B cell (primary cell): ENCODE measurements at regions of chr3 and their contacts with region 1.

Region 1: GRCh38 chr3:142279965-142280590 is 54.7 kb upstream of the GK5 start:
- DNase-seq: peak; percentile 72
- ATAC-seq: peak; percentile 67
- H3K4me3 ChIP-seq: no peak overlapping the region
- H3K4me3 Mint-ChIP-seq: no peak overlapping the region
- H3K27ac ChIP-seq: no peak overlapping the region
- H3K27ac Mint-ChIP-seq: no peak overlapping the region
- H3K4me1 ChIP-seq: no peaks in the 10 kb centered on the region
- H3K4me1 Mint-ChIP-seq: no peaks in the 10 kb centered on the region
- H3K27me3 ChIP-seq: no peaks in the 10 kb centered on the region
- H3K27me3 Mint-ChIP-seq: no peaks in the 10 kb centered on the region
- CTCF ChIP-seq: peak; percentile 64

Region 2: GRCh38 chr3:141959921-141960554 is 320.0 kb before region 1 on chr3:
- CTCF ChIA-PET with region 1: interaction called, 27 read pairs
- POLR2A ChIA-PET with region 1: no interaction called
- intact Hi-C with region 1: no loop called
- DNase-seq: no peak
- ATAC-seq: no peak
- H3K4me3 ChIP-seq: no peak overlapping the region
- H3K4me3 Mint-ChIP-seq: no peak overlapping the region
- H3K27ac ChIP-seq: no peak overlapping the region
- H3K27ac Mint-ChIP-seq: no peak overlapping the region
- H3K4me1 ChIP-seq: no peaks in the 10 kb centered on the region
- H3K4me1 Mint-ChIP-seq: no peaks in the 10 kb centered on the region
- H3K27me3 ChIP-seq: no peaks in the 10 kb centered on the region
- H3K27me3 Mint-ChIP-seq: no peaks in the 10 kb centered on the region
- CTCF ChIP-seq: no peak

Region 3: GRCh38 chr3:142124243-142124642 is 155.8 kb before region 1 on chr3:
- CTCF ChIA-PET with region 1: interaction called, 63 read pairs
- POLR2A ChIA-PET with region 1: no interaction called
- intact Hi-C with region 1: no loop called
- DNase-seq: no peak
- ATAC-seq: no peak
- H3K4me3 ChIP-seq: no peak overlapping the region
- H3K4me3 Mint-ChIP-seq: no peak overlapping the region
- H3K27ac ChIP-seq: no peak overlapping the region
- H3K27ac Mint-ChIP-seq: no peak overlapping the region
- H3K4me1 ChIP-seq: no peaks in the 10 kb centered on the region
- H3K4me1 Mint-ChIP-seq: peaks cover 1% of the 10 kb centered on the region
- H3K27me3 ChIP-seq: no peaks in the 10 kb centered on the region
- H3K27me3 Mint-ChIP-seq: no peaks in the 10 kb centered on the region
- CTCF ChIP-seq: no peak

Region 4: GRCh38 chr3:142129516-142130171 is 150.4 kb before region 1 on chr3:
- CTCF ChIA-PET with region 1: interaction called, 63 read pairs
- POLR2A ChIA-PET with region 1: no interaction called
- intact Hi-C with region 1: no loop called
- DNase-seq: no peak
- ATAC-seq: no peak
- H3K4me3 ChIP-seq: no peak overlapping the region
- H3K4me3 Mint-ChIP-seq: no peak overlapping the region
- H3K27ac ChIP-seq: no peak overlapping the region
- H3K27ac Mint-ChIP-seq: no peak overlapping the region
- H3K4me1 ChIP-seq: no peaks in the 10 kb centered on the region
- H3K4me1 Mint-ChIP-seq: peaks cover 1% of the 10 kb centered on the region
- H3K27me3 ChIP-seq: no peaks in the 10 kb centered on the region
- H3K27me3 Mint-ChIP-seq: no peaks in the 10 kb centered on the region
- CTCF ChIP-seq: no peak

Region 5: DNA sequence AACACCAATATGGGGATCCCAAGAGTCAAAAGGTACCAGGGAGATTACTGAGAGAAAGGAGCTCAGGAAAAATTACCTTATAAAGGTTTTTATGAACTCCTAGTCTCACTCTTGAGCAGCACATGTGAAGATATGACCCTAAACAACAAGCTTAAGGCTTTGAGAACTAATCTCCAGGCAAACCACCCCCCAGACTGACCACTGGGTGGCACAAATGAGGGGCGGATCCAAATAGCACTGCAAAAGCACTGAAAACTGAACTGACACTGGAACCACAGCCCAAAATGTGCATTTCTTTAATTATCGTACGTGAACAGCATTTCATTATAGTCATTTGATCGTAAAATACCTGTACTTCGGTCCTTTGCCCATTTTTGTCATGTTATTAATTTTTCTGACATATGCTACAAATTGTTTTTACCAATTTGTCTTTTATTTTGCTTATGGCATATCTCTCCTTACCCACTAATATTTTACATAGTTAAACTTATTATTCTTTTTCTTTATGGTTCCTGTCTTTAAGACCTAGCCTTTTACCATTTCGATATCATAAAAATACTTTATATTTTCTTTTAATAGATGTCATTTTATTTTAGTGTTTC is 99.2 kb before region 1 on chr3:
- CTCF ChIA-PET with region 1: interaction called, 3 read pairs
- POLR2A ChIA-PET with region 1: no interaction called
- intact Hi-C with region 1: loop called (anchors 5 kb)
- DNase-seq: peak; percentile 14
- ATAC-seq: no peak
- H3K4me3 ChIP-seq: no peak overlapping the region
- H3K4me3 Mint-ChIP-seq: no peak overlapping the region
- H3K27ac ChIP-seq: no peak overlapping the region
- H3K27ac Mint-ChIP-seq: no peak overlapping the region
- H3K4me1 ChIP-seq: no peaks in the 10 kb centered on the region
- H3K4me1 Mint-ChIP-seq: no peaks in the 10 kb centered on the region
- H3K27me3 ChIP-seq: no peaks in the 10 kb centered on the region
- H3K27me3 Mint-ChIP-seq: no peaks in the 10 kb centered on the region
- CTCF ChIP-seq: no peak